SK-N-SH (cell line): ENCODE measurements at regions of chr2 and their contacts with region 1.

Region 1: DNA sequence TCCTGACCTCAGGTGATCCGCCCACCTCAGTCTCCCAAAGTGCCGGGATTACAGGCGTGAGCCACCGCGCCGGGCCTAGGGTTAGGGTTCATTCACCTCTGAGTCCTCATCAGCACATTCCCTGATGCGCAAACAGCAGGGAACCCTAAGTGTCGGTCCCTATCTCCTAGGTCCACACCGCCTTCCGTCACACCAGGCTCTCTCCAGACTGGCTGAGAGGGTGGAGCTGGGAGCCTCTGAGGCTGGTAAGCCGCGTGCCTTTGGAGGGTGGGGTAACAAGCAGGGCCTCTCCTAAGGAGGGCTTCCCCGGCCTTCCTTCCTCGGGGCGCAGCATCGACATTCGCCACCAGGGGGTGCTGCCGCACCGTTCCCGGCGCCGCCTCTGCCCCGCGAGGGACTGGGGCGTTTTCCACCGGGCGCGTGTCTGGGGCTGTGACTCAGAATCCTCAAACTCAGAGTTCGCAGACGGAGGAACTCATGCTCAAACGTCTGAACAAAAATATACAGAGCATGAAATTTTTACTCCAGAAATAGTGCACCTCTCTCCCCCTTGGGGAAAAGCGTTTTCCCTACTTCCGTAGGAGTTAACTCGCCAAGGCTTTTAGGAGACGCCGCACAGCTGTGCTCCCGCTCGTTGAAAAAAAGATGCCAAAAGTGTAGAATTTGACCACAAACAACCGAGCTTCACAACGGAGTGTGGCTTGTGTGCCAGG is 63.9 kb upstream of the ASAP2 start:
- DNase-seq: peak; percentile 94
- H3K4me3 ChIP-seq: peak overlapping the region; percentile 23 to 36; a peak in 2 of 4 replicates
- H3K27ac ChIP-seq: peak overlapping the region; percentile 16 to 58; a peak in 3 of 4 replicates
- H3K4me1 ChIP-seq: peaks cover 3 to 8% of the 10 kb centered on the region in 2 experiments; a peak in 2 of 4 replicates
- H3K27me3 ChIP-seq: no peaks in the 10 kb centered on the region
- CTCF ChIP-seq: peak; percentile 99
- EP300 ChIP-seq: peak in 1 of 2 experiments; percentile 44; a peak in 1 of 4 replicates
- RAD21 ChIP-seq: peak; percentile 99

Region 2: GRCh38 chr2:8803658-8804379 is 338.9 kb before region 1 on chr2:
- CTCF ChIA-PET with region 1: interaction called, 10 read pairs
- POLR2A ChIA-PET with region 1: no interaction called
- DNase-seq: no peak
- H3K4me3 ChIP-seq: no peak overlapping the region
- H3K27ac ChIP-seq: peak overlapping the region in 1 of 2 experiments; percentile 24; a peak in 1 of 4 replicates
- H3K4me1 ChIP-seq: peaks cover 2 to 7% of the 10 kb centered on the region in 2 experiments; a peak in 2 of 4 replicates
- H3K27me3 ChIP-seq: no peaks in the 10 kb centered on the region
- CTCF ChIP-seq: no peak
- EP300 ChIP-seq: no peak
- RAD21 ChIP-seq: no peak

Region 3: DNA sequence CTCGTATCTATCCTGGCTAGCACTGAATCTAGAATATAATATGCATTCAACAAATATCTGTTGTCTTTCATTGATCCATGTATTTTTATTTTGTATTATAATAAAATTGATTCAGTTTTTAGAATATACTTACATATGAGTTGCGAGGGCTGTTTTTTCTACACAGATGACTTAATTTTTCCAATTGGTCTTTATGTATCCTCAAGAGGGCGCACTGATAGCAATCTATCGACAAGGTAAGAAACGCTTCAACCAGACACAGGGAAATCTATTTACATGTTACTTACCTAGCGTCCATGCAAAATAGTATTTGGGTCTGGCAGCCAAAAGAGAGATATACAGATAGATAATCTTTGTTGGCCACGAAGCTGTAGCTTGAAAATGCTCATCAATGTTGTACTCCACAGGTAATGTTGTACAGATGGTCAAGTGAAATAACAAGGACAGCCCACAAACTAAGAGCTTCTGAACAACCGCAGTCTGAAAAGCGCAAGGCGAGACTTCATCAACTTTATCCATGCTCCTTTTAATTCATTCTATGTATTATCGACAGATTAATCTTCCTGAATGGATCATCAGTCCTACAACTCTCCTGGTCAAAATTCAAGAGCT is 269.8 kb before region 1 on chr2:
- CTCF ChIA-PET with region 1: interaction called, 99 read pairs
- POLR2A ChIA-PET with region 1: no interaction called
- DNase-seq: peak; percentile 63
- H3K4me3 ChIP-seq: no peak overlapping the region
- H3K27ac ChIP-seq: no peak overlapping the region
- H3K4me1 ChIP-seq: no peaks in the 10 kb centered on the region
- H3K27me3 ChIP-seq: no peaks in the 10 kb centered on the region
- CTCF ChIP-seq: peak; percentile 84
- EP300 ChIP-seq: no peak
- RAD21 ChIP-seq: peak; percentile 87

Region 4: GRCh38 chr2:9077691-9078090 is 65.0 kb before region 1 on chr2:
- CTCF ChIA-PET with region 1: interaction called, 11 read pairs
- POLR2A ChIA-PET with region 1: no interaction called
- DNase-seq: no peak
- H3K4me3 ChIP-seq: no peak overlapping the region
- H3K27ac ChIP-seq: no peak overlapping the region
- H3K4me1 ChIP-seq: peaks cover 0 to 2% of the 10 kb centered on the region in 2 experiments; a peak in 1 of 4 replicates
- H3K27me3 ChIP-seq: no peaks in the 10 kb centered on the region
- CTCF ChIP-seq: no peak
- EP300 ChIP-seq: no peak
- RAD21 ChIP-seq: no peak

Region 5: GRCh38 chr2:9221223-9221622 is 78.5 kb after region 1 on chr2:
- CTCF ChIA-PET with region 1: no interaction called
- POLR2A ChIA-PET with region 1: no interaction called
- DNase-seq: no peak
- H3K4me3 ChIP-seq: no peak overlapping the region
- H3K27ac ChIP-seq: no peak overlapping the region
- H3K4me1 ChIP-seq: peaks cover 36 to 37% of the 10 kb centered on the region in 2 experiments
- H3K27me3 ChIP-seq: no peaks in the 10 kb centered on the region
- CTCF ChIP-seq: no peak
- EP300 ChIP-seq: no peak
- RAD21 ChIP-seq: no peak

Region 6: DNA sequence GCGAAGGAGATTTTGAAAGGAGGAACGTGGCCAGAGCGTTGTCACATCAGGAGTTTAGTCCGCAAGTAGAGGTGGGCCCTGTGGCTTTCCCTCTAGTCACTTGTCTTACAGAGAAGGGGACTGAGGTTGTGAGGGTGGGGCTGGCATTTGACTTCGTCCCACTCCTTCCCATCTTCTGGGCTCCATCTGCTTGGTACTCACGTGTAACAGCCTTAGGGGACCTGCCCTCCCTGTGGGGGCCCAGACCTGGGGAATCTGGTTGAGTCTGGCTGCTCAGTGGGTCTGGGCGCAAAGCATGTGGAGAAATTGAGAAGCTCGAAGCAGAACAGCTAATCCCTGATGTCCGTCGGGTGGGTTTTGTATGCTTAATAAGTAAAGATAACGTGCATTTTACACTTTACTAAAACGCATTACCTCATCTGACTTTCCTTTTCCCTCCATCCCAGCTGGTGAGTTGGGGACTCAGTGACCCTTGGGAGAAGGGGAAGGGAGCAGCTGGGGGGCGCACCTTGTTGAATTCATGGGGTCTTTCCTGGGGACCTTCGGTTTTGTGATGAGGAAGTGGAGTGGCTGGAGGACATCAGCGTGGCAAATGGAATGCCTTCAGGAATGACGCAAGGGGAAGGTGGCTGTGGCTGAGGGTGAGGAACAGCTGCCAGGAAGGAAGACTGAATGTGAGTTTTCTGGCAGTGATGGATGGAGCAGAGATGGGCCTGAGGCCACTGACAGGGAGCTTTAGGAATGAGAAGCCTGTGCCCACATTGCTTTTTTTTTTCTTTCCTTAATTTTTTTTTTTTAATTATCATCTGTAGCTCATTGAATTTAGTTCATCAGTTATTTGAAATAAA is 108.7 kb after region 1 on chr2:
- CTCF ChIA-PET with region 1: interaction called, 13 read pairs
- POLR2A ChIA-PET with region 1: no interaction called
- DNase-seq: no peak
- H3K4me3 ChIP-seq: no peak overlapping the region
- H3K27ac ChIP-seq: peak overlapping the region; percentile 89 to 100
- H3K4me1 ChIP-seq: peaks cover 73 to 75% of the 10 kb centered on the region in 2 experiments
- H3K27me3 ChIP-seq: no peaks in the 10 kb centered on the region
- CTCF ChIP-seq: no peak
- EP300 ChIP-seq: peak; percentile 68 to 76; a peak in 3 of 4 replicates
- RAD21 ChIP-seq: no peak

Region 7: DNA sequence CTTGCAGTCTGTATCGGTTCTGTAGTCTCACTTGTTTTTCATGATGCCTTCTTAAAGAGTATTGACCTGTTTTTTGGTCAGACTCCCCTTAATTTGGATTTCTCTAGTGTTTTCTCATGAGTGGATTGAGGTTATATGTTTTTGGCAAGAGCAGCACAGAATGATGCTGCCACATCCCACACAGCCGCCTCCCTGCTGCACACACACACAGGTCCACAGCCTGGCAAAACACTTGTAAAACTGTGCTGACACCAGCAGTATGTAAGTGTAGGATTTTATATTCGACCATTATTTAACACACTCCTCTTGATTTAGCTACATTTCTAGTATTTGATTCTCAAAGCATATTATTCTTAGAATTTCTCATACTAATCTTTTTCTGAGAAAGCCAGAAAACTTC is 212.6 kb after region 1 on chr2:
- CTCF ChIA-PET with region 1: interaction called, 18 read pairs
- POLR2A ChIA-PET with region 1: no interaction called
- DNase-seq: no peak
- H3K4me3 ChIP-seq: no peak overlapping the region
- H3K27ac ChIP-seq: no peak overlapping the region
- H3K4me1 ChIP-seq: no peaks in the 10 kb centered on the region; a peak in 1 of 4 replicates
- H3K27me3 ChIP-seq: no peaks in the 10 kb centered on the region
- CTCF ChIP-seq: no peak
- EP300 ChIP-seq: no peak
- RAD21 ChIP-seq: no peak

Region 8: DNA sequence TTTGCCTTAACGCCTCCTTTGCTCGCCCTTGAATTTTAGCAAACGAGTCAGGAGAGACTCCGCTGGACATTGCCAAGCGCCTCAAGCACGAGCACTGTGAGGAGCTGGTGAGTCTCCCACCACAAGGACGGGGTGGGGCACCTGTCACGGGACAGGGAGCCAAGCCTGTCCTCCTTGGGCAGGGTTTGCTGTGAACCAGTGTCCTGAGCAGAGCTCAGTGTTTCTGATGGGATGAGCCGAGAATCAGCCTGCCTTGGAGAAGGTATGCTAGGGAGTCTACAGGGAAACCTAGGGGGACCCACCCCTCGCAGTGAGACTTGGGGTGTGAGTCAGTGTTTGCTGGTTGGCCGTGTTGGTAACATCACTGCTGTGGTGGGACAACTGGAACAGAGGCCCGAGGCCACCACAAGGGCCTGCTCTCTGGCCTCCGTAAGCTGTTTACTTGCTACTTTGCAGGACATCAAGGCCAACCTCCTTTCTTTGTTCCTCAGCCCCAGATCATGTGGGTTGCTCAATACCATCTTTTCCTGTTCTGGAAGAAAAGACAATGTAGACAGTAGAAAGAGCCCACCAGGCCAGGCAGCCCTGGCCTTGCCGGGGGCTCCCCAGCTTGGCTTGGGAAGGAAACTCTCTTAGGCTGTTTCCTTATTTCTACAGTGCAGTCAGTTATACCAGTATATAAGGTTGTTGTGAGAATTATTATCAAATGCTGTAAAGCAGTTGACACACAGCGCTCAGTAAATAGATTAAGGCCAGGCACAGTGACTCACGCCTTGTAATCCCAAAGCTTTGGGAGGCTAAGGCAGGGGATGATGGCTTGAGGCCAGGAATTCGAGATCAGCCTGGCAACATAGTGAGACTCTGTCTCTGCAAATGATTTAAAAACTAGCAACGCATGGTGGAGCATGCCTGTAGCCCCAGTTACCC is 238.3 kb after region 1 on chr2:
- CTCF ChIA-PET with region 1: interaction called, 21 read pairs
- POLR2A ChIA-PET with region 1: no interaction called
- DNase-seq: no peak
- H3K4me3 ChIP-seq: no peak overlapping the region
- H3K27ac ChIP-seq: peak overlapping the region; percentile 67 to 97
- H3K4me1 ChIP-seq: peaks cover 28 to 52% of the 10 kb centered on the region in 2 experiments
- H3K27me3 ChIP-seq: no peaks in the 10 kb centered on the region
- CTCF ChIP-seq: no peak
- EP300 ChIP-seq: peak in 1 of 2 experiments; percentile 77; a peak in 1 of 4 replicates
- RAD21 ChIP-seq: no peak